Endothelial cell of umbilical vein (primary cell): ENCODE measurements at regions of chr4 and their contacts with region 1.

Region 1: DNA sequence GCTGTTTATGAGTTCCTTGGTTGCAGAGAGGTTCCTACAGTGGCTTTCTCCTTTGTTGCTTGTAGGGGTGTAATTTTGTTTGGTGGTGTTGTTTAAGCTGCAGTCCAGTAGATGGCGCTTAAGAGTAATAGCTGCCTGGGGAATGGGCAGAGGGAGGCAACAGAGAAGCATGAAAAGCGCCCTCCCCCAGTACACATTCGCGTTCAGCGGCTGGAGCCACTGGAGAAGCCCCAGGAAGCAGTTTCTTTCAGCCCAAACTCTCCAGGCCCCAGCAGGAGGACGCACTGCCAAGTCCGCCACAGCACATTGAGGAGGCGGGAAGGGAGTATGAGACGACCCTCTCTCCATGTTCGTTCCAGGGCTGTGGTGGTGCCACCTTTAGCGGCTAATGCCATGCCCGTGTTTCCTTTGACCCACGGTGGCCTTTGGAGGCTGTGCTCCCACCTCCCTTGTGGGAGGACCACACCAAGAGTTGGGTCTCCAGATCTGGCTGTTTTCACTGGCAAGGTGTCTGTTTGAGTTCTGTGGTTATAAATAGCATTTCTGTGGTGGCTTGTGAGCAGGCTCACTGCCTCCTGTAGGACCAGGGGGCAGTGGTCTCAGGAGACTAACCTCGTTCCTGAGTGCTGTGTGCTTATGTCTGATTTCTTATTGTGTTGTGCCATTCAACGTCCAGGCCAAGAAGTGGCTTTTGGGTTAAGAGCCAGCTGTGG is 252.3 kb downstream of the ARHGAP10 start:
- DNase-seq: peak; percentile 63
- H3K4me3 ChIP-seq: no peak overlapping the region
- H3K27ac ChIP-seq: no peak overlapping the region
- H3K4me1 ChIP-seq: no peaks in the 10 kb centered on the region
- H3K27me3 ChIP-seq: no peaks in the 10 kb centered on the region
- CTCF ChIP-seq: peak; percentile 73 to 80
- POLR2A ChIP-seq: no peak

Region 2: DNA sequence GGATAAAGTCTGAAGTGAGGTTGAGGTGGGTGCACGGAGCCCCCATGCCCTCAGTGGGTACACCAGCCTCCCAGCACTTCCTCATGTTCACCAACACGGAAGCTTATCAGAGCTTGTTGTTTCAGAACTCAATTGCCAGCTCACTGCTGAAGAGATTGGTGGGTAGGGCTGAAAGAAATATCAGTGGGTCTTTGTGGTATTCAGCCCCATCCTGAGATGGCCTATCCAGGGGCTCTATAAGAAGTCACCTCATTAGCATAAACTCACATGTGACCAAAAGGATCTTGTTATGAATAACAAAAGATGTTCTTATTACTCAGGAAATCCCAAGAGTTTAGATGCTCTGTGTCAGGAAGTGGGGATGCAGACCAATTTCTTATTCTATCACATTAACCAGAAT is 75.0 kb before region 1 on chr4:
- CTCF ChIA-PET with region 1: no interaction called
- POLR2A ChIA-PET with region 1: no interaction called
- dilution Hi-C with region 1: no loop called
- intact Hi-C with region 1: no loop called
- DNase-seq: no peak
- H3K4me3 ChIP-seq: no peak overlapping the region
- H3K27ac ChIP-seq: no peak overlapping the region
- H3K4me1 ChIP-seq: no peaks in the 10 kb centered on the region
- H3K27me3 ChIP-seq: no peaks in the 10 kb centered on the region
- CTCF ChIP-seq: no peak
- POLR2A ChIP-seq: no peak

Region 3: DNA sequence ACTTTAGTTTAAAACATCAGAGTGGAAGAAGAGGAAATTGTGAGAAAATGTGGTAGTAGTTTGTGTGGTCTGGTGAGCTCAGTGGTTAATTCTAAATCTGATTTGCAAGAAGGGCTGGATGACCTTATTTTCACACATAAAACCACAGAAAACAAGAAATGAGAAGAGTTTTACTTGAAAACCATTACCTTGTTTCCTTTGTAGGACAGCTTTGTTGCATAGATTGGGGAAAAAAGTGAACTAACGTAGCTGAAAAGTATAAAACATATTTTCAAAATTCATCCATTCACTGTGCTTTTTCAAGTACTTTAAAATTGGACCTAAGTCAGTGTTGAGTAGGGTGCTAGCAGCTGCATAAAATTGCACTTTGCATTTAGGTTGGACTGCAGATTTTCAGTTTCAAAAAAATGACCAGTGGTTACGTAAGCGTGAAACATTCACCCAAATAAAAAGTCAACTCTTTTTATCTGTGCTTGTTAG is 41.0 kb before region 1 on chr4:
- CTCF ChIA-PET with region 1: no interaction called
- POLR2A ChIA-PET with region 1: interaction called, 13 read pairs
- dilution Hi-C with region 1: no loop called
- intact Hi-C with region 1: no loop called
- DNase-seq: no peak
- H3K4me3 ChIP-seq: no peak overlapping the region
- H3K27ac ChIP-seq: no peak overlapping the region
- H3K4me1 ChIP-seq: no peaks in the 10 kb centered on the region
- H3K27me3 ChIP-seq: no peaks in the 10 kb centered on the region
- CTCF ChIP-seq: no peak
- POLR2A ChIP-seq: no peak

Region 4: GRCh38 chr4:148004228-148004857 is 20.1 kb after region 1 on chr4:
- CTCF ChIA-PET with region 1: interaction called, 10 read pairs
- POLR2A ChIA-PET with region 1: no interaction called
- dilution Hi-C with region 1: no loop called
- intact Hi-C with region 1: no loop called
- DNase-seq: no peak
- H3K4me3 ChIP-seq: no peak overlapping the region
- H3K27ac ChIP-seq: no peak overlapping the region
- H3K4me1 ChIP-seq: peaks cover 20% of the 10 kb centered on the region
- H3K27me3 ChIP-seq: no peaks in the 10 kb centered on the region
- CTCF ChIP-seq: no peak
- POLR2A ChIP-seq: no peak

Region 5: DNA sequence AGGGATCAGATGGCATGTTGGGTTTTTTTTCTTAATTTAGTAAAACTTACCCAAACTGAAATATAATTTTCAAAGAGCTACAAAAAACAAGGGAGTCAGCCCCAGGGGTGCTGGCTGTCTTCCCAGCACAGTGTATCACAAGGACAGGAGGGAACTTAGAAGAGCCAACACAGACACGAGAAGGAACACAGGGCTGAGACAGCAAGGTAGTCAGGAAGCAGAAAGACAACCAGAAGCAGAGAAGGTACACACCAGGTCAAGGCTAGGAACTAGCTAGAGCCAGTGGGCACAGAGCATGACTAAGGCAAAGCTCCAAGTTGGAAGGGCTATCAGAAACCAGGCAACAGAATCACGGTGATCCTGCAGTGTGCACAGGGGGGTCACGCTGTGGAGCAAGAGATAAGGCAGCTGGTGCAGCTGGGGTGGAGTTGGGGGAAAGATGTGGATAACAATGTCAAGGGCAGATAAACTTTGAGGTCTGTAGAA is 289.3 kb after region 1 on chr4:
- CTCF ChIA-PET with region 1: no interaction called
- POLR2A ChIA-PET with region 1: no interaction called
- dilution Hi-C with region 1: no loop called
- intact Hi-C with region 1: loop called (anchors 5 kb)
- DNase-seq: peak; percentile 43
- H3K4me3 ChIP-seq: no peak overlapping the region
- H3K27ac ChIP-seq: no peak overlapping the region
- H3K4me1 ChIP-seq: peaks cover 14% of the 10 kb centered on the region
- H3K27me3 ChIP-seq: no peaks in the 10 kb centered on the region
- CTCF ChIP-seq: no peak
- POLR2A ChIP-seq: no peak

Region 6: GRCh38 chr4:148764720-148765119 is 780.5 kb after region 1 on chr4:
- CTCF ChIA-PET with region 1: no interaction called
- POLR2A ChIA-PET with region 1: no interaction called
- dilution Hi-C with region 1: no loop called
- intact Hi-C with region 1: loop called (anchors 10 kb)
- DNase-seq: no peak
- H3K4me3 ChIP-seq: no peak overlapping the region
- H3K27ac ChIP-seq: no peak overlapping the region
- H3K4me1 ChIP-seq: no peaks in the 10 kb centered on the region
- H3K27me3 ChIP-seq: no peaks in the 10 kb centered on the region
- CTCF ChIP-seq: no peak
- POLR2A ChIP-seq: no peak

Region 7: DNA sequence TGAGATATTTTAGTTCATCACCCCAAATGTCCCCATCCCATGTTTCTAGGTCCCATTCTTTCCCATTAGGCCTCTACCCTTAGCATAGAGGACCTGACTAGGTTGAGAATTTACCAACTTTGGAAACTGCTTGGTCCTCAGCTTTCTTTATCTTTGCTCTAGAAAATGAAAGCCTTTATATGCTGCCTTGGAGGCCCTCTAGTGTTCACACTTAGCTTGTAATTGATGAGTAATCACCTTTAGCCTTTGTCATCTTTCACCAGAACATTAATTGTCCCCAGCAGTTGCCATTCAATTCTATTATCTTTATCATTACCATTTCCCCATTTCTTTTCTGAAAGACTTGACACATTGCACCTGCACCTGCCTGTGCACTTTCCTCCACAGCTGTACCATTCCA is 1047.2 kb after region 1 on chr4:
- CTCF ChIA-PET with region 1: interaction called, 21 read pairs
- POLR2A ChIA-PET with region 1: no interaction called
- dilution Hi-C with region 1: no loop called
- intact Hi-C with region 1: loop called (anchors 1 kb)
- DNase-seq: peak; percentile 50
- H3K4me3 ChIP-seq: no peak overlapping the region
- H3K27ac ChIP-seq: no peak overlapping the region
- H3K4me1 ChIP-seq: no peaks in the 10 kb centered on the region
- H3K27me3 ChIP-seq: no peaks in the 10 kb centered on the region
- CTCF ChIP-seq: peak; percentile 28 to 53
- POLR2A ChIP-seq: no peak